Posterior cingulate gyrus (tissue), 11 donors: ENCODE measurements at regions of chr2 and their contacts with region 1.

Region 1: DNA sequence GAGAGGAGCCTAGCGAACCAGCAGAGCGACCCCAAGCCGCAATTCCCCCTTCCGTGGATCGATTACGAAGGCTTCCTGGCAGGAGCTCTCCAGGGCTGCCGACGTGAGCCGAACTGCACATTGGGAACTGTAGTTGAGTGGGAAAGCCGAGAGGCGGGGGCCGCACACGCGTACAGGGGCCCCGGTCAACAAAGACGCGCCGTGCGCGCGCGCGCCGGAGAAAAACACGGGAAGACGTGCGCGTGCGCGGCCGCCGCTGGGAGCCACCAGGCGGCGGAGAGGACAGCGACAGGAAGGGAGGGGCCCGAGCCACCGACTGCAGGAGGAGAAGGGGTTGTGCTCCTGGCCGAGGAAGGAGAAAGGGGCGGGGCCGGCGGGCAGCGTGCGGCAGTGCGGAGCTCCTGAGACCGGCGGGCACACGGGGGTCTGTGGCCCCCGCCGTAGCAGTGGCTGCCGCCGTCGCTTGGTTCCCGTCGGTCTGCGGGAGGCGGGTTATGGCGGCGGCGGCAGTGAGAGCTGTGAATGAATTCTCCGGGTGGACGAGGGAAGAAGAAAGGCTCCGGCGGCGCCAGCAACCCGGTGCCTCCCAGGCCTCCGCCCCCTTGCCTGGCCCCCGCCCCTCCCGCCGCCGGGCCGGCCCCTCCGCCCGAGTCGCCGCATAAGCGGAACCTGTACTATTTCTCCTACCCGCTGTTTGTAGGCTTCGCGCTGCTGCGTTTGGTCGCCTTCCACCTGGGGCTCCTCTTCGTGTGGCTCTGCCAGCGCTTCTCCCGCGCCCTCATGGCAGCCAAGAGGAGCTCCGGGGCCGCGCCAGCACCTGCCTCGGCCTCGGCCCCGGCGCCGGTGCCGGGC is at the start of gene SPAST:
- DNase-seq: peak; percentile 90 to 100 (median 96)

Region 2: DNA sequence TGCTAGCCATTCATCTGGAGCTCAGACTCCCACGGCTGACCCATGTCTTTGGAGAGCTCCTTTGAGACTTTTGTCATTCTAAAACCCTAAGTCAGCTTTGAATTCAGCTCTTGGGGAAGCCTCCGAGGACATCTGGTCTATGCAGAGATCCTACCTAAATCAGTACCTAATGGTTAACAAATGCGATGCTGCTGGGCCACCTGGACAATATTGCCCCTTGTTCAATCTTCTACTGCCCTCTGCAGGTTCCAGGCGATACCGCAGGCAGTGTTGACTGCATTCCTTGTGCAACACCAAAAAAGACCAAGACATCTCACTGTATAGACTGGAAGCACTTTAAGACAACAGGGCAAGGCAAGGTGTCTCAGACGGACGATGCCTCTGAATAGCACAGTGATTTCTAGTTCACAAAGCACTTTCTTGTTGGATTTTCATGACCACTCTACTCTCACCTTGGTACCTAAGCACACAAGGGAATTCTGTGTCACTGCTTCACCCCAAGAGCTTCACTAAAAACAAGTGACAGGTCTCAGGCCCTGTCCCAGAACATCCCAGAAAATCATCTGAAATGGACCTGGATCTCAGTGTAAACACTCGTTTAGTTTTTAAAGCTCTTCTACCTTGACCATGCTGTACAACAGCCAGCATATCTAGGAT is 729.9 kb before region 1 on chr2:
- intact Hi-C with region 1: no loop called
- DNase-seq: peak; percentile 71 to 95 (median 89)

Region 3: DNA sequence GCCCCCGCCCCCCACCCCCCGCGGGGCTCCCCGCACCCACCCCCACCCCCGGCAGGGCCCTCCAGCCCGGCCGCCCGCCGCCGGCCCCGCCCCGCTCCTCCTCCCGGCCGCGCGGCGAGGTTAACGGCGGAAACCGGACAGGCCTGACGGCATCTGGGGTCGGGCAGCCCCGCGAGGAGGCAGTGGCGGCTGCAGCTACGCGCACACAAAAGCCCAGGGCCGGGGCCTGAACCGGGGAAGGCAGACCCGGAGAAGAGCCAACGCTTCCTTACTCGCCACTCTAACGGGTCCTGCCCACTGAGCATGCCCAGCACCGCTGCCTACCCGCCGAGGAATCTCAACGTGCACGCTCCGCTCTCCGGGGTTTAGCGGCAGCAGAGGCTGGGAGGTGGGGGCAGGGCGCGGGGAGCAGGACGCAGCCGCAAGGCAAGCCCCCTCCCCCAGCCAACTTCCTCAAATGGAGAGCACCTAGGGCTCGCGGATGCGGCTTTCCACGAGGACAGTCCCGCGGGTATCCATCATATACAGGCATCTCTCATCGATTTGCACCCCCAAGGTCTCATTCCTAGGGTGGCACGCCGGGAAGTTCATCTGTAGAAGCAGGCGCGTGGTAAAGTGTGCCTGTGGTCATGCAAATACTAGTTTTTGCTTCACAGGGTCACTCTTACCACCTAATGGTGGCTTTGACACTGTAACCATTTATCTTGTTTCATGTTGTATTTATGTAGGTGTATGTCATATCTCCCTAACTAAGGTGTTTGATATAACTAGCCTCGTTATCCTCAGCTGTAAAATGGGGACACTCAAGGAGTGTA is 52.7 kb before region 1 on chr2 and contains the start of gene MEMO1:
- intact Hi-C with region 1: loop called (anchors 1 kb)
- DNase-seq: peak; percentile 85 to 98 (median 91)

Region 4: DNA sequence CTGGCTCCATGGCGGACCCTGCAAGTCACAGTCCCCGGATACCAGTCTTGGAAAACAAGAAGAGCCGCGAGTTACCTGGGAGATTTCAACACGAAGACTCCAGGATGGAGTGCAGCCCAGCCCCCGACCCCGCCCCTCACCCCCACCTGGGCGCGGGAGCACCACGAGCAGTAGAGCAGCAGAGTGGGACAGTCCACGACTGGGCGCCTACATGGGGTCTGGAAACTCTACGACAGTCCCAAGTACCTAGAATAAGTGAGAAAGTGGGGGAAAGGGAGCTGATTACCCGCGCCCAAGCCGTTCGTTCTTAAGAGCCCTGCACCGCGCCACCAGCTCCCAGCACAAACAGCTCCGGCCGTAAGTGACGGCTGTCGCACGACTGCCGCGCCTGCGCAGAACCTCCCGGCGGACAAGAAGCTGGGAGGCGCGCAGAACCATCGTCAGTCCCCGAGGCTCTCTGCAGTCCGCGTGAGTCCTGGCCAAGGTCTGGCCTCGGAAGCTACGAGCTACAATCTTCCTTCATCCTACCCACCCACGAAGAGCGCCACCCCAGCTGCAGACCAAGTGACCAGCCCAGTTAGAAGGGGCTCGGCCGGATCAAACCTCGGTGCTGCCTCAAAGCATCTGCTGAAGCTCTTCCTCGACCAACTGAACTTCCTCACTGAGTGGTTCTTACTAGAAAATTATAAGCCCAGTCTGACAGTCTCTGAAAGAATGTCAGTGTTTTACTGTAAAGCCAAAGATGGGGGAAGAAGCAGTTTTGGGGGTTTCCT is 23.9 kb before region 1 on chr2 and contains the start of gene DPY30:
- intact Hi-C with region 1: loop called (anchors 1 kb)
- DNase-seq: peak; percentile 88 to 99 (median 92)

Region 5: GRCh38 chr2:32168513-32168912 is 105.0 kb after region 1 on chr2:
- intact Hi-C with region 1: loop called (anchors 2 kb)
- DNase-seq: no peak

Region 6: GRCh38 chr2:32356735-32357644 is 293.5 kb after region 1 on chr2 and contains the start of gene BIRC6:
- intact Hi-C with region 1: loop called (anchors 10 kb)
- DNase-seq: peak; percentile 99 to 100 (median 99)